ENCODE measurements at regions of chr1 and their contacts with region 1.

Region 1: GRCh38 chr1:27284425-27285273 is 37.3 kb upstream of the TMEM222 start:
- DNase-seq: peak; percentile 60 to 94
- H3K4me3 ChIP-seq: no peak overlapping the region
- H3K4me1 ChIP-seq: no peaks in the 10 kb centered on the region
- H3K27me3 ChIP-seq: no peaks in the 10 kb centered on the region

Region 2: GRCh38 chr1:27102707-27103491 is 181.8 kb before region 1 on chr1:
- in situ Hi-C with region 1: loop called (anchors 5 kb)
- DNase-seq: peak; percentile 39 to 88
- H3K4me3 ChIP-seq: no peak overlapping the region
- H3K4me1 ChIP-seq: peaks cover 10% of the 10 kb centered on the region
- H3K27me3 ChIP-seq: no peaks in the 10 kb centered on the region

Region 3: DNA sequence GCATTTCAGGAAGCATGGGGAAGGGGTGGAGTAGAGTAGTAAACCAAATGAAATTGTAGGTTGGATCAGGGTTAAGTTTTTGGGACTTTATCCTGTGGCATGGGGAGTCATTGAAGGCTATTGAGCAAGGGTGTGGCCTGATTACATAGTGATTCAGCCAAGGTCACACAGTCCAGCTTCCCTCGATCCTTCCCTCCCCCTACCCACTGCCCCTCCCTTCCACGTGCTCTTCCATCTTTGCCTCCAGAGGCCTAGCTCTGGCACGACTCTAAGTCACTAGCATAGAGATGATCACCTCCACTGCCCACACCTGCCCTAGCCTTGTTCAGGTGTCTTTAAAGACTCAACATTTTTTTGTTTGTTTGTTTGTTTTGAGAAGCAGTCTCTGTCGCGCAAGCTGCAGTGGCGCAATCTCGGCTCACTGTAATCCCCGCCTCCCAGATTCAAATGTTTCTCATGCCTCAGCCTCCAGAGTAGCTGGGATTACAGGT is 92.6 kb before region 1 on chr1:
- in situ Hi-C with region 1: loop called (anchors 10 kb)
- DNase-seq: no peak
- H3K4me3 ChIP-seq: no peak overlapping the region
- H3K4me1 ChIP-seq: no peaks in the 10 kb centered on the region
- H3K27me3 ChIP-seq: 0 out of 2 replicates have a peak, but pooled peaks cover 2% of the 10 kb centered on the region

Measured in HAP-1 (cell line).